ENCODE measurements at regions of chr5 and their contacts with region 1.

Region 1: GRCh38 chr5:32390819-32391591 is 53.5 kb downstream of the ZFR start:
- DNase-seq: peak; percentile 88
- H3K4me3 ChIP-seq: no peak overlapping the region
- H3K27ac ChIP-seq: peak overlapping the region; percentile 75
- H3K4me1 ChIP-seq: peaks cover 12% of the 10 kb centered on the region
- H3K27me3 ChIP-seq: no peaks in the 10 kb centered on the region
- CTCF ChIP-seq: no peak

Region 2: DNA sequence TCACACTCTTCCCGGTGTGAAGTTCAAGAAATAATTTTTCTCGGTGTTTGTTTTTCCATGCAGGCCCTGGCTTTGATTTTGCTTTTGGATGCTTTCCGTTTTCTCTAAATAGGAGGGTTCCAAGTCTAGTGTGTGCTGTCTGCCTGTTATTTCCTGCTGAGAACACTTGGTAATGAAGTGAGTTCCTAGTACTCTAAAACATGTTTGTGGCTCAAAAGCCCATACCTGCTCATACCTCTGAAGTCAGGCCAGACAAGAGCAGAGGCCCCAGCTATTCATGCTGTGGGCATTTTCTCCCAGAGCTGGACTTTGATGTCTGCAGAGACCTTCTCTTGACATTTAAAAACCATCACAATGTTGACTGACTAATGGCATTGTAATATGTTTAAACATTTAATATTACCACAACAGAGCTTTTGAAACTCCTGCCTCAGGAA is 428.1 kb before region 1 on chr5:
- CTCF ChIA-PET with region 1: no interaction called
- dilution Hi-C with region 1: no loop called
- in situ Hi-C with region 1: no loop called
- intact Hi-C with region 1: no loop called
- DNase-seq: peak; percentile 76
- H3K4me3 ChIP-seq: no peak overlapping the region
- H3K27ac ChIP-seq: no peak overlapping the region
- H3K4me1 ChIP-seq: peaks cover 11% of the 10 kb centered on the region
- H3K27me3 ChIP-seq: peaks cover 2% of the 10 kb centered on the region
- CTCF ChIP-seq: no peak

Region 3: GRCh38 chr5:32342656-32343055 is 48.3 kb before region 1 on chr5:
- CTCF ChIA-PET with region 1: interaction called, 10 read pairs
- dilution Hi-C with region 1: no loop called
- in situ Hi-C with region 1: no loop called
- intact Hi-C with region 1: no loop called
- DNase-seq: no peak
- H3K4me3 ChIP-seq: no peak overlapping the region
- H3K27ac ChIP-seq: no peak overlapping the region
- H3K4me1 ChIP-seq: no peaks in the 10 kb centered on the region
- H3K27me3 ChIP-seq: no peaks in the 10 kb centered on the region
- CTCF ChIP-seq: no peak

Region 4: DNA sequence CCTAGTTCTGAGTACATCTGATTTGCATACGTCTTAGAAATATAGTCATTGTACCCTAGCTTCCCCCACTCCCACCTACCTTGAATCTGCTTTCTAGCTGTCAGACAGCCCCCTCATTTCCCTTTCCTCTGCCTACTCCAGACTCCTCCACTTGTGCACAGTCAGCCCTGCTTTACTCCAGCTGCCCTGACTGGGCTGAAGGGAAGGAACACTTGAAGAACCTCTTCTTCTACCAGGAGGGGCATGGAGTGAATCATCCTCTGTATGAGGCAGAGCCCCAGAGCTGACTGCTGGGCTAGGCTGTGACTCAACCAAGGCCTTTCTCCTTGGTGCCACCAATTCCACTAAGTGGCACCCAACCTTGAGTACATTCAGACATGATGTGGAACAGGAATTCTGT is 71.6 kb after region 1 on chr5:
- CTCF ChIA-PET with region 1: no interaction called
- dilution Hi-C with region 1: no loop called
- in situ Hi-C with region 1: no loop called
- intact Hi-C with region 1: no loop called
- DNase-seq: peak; percentile 68
- H3K4me3 ChIP-seq: no peak overlapping the region
- H3K27ac ChIP-seq: no peak overlapping the region
- H3K4me1 ChIP-seq: no peaks in the 10 kb centered on the region
- H3K27me3 ChIP-seq: no peaks in the 10 kb centered on the region
- CTCF ChIP-seq: no peak

Region 5: DNA sequence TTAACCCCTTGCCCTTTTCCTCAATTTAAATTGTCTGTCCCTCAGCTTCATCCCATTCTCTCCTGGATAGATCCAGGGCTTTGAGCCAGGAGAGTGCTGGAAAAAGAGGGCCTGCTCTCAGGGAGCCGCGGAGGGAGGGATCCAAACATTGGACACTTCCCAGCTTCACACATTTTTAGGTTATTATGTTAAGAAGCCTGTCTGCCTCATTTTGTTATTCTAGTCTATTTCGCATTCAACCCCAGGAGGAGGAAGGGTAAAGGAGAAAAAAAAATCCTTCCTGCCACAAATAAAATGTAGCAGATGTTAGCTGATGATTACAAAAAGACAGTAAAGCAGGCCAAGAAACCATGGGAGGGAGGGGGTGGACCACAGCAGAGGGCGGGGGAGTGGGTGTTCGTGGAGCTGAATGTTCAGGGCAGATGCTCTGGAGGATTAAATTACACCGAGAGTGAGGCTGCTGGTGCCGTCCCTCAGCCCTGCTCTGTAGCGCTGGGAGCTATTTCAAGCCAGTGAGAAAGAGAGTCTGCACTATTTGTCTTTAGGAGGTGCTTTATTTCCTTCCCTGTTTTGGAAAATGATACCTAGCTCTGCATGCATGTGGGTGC is 114.1 kb after region 1 on chr5:
- CTCF ChIA-PET with region 1: no interaction called
- dilution Hi-C with region 1: no loop called
- in situ Hi-C with region 1: no loop called
- intact Hi-C with region 1: no loop called
- DNase-seq: no peak
- H3K4me3 ChIP-seq: no peak overlapping the region
- H3K27ac ChIP-seq: no peak overlapping the region
- H3K4me1 ChIP-seq: peaks cover 33% of the 10 kb centered on the region
- H3K27me3 ChIP-seq: no peaks in the 10 kb centered on the region
- CTCF ChIP-seq: no peak